ENCODE measurements at regions of chr6 and their contacts with region 1.

Region 1: DNA sequence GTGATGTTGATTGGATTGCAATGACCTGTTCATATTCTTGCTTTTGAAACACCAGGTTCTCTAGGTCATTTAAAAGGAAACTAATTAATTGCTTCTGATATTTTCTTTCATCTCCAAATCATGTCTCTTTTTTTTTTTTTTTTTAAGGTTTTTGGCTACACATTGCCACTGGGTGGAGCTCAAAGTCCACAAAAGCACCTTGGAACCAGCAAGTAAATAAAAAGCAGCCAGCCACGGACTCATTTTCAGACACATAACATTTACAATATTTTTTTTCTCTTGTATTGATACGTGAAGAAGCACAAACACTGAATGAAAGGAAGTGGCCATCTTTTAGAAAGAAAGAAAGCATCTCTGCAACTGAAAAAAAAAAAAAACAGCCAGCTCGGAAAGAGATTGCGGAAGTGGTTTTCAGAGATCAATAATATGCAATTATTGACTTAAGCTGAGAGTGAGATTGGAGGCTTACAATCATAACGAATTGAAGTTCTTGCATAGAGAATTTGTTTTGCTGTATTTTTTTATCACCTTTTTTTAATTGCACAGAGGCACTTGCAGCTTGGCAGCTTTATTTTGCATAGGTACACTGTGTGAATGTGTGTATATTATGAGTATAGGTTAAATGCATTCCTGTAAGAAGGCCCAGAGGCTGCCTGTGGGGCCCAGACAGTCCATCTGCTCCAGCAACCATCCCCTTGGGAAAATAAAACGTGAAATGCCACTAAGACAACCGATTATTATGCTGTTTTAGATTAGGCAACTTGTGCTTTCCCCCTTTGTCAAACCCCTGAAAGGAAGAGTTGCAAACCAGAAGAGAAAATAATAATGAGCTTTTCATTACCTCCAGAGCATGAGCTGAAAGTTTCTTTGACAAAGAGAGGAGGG is 28.2 kb downstream of the CGA start:
- DNase-seq: peak; percentile 61
- ATAC-seq: no peak
- H3K4me3 Mint-ChIP-seq: no peak overlapping the region
- H3K27ac Mint-ChIP-seq: no peak overlapping the region
- H3K4me1 Mint-ChIP-seq: no peaks in the 10 kb centered on the region
- H3K27me3 Mint-ChIP-seq: peaks cover 19% of the 10 kb centered on the region

Region 2: DNA sequence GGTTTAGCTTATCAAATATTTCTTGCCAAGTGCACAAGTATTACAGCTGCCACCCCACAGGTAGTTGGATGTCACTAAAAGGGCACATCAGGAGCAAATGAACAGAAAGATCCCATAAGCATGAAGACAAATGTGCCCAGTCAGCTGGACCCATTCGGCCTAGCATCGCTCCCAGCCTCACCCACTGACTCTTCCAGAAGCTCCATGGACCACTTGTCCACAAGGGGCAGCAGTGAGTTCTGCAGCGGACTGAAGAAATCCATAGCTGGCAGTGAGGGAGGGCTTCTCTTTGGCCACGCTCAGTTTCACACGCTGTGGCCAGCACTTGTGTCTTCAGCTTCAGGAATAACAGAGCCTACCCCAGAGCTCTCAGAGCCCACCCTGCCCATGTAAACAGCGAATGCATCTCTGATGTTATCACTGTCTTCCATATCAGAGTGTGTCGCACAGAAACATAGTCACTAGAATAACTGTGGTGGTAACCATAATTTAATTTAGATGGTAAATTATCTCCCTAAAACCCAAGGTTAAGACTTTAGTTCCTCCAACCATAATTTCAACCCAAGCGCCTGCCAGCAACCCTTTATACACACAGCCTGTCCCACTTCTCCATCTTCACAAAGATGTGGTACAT is 12.4 kb after region 1 on chr6:
- CTCF ChIA-PET with region 1: interaction called, 37 read pairs
- POLR2A ChIA-PET with region 1: no interaction called
- intact Hi-C with region 1: no loop called
- DNase-seq: peak; percentile 76
- ATAC-seq: peak; percentile 84
- H3K4me3 Mint-ChIP-seq: no peak overlapping the region
- H3K27ac Mint-ChIP-seq: no peak overlapping the region
- H3K4me1 Mint-ChIP-seq: no peaks in the 10 kb centered on the region
- H3K27me3 Mint-ChIP-seq: peaks cover 18% of the 10 kb centered on the region

Region 3: GRCh38 chr6:87139236-87139635 is 72.5 kb after region 1 on chr6:
- CTCF ChIA-PET with region 1: interaction called, 5 read pairs
- POLR2A ChIA-PET with region 1: no interaction called
- intact Hi-C with region 1: loop called in 1 of 2 experiments (anchors 5 kb)
- DNase-seq: peak; percentile 43
- ATAC-seq: peak; percentile 70
- H3K4me3 Mint-ChIP-seq: no peak overlapping the region
- H3K27ac Mint-ChIP-seq: no peak overlapping the region
- H3K4me1 Mint-ChIP-seq: peaks cover 2% of the 10 kb centered on the region
- H3K27me3 Mint-ChIP-seq: peaks cover 7% of the 10 kb centered on the region

Region 4: GRCh38 chr6:87237804-87238203 is 171.1 kb after region 1 on chr6:
- CTCF ChIA-PET with region 1: no interaction called
- POLR2A ChIA-PET with region 1: no interaction called
- intact Hi-C with region 1: loop called in 1 of 2 experiments (anchors 5 kb)
- DNase-seq: no peak
- ATAC-seq: peak; percentile 64
- H3K4me3 Mint-ChIP-seq: no peak overlapping the region
- H3K27ac Mint-ChIP-seq: no peak overlapping the region
- H3K4me1 Mint-ChIP-seq: no peaks in the 10 kb centered on the region
- H3K27me3 Mint-ChIP-seq: no peaks in the 10 kb centered on the region

Region 5: DNA sequence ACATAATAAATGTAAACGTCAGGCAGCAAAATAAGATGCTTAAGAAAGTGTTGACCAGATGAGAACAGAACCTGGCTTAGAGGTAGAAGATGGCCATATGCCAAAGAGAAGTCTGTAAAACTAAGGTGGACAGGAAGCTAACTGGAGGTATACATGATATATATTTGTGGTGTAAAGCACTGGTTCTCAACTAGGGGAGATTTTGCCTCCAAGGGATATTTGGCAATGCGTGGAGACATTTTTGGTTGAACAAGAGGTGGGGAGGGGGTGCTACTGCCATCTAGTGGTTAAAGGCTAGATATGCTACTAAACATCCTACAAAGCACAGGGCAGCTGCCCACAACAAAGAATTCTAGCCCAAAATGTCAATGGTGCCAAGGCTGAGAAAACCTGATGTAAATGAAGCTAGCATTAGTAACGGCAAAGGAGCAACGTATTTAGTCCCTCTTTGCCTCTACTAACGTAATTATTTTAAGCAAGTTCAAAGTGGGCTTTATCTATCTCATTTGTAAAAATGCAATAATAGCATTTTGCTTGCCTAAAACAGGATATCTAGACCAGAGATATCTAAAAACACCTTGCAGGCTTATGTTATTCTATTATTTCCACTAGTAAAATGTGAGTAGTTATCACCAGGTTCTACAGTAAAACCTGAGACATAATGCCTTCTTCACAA is 1714.2 kb after region 1 on chr6:
- CTCF ChIA-PET with region 1: no interaction called
- POLR2A ChIA-PET with region 1: no interaction called
- intact Hi-C with region 1: loop called in 1 of 2 experiments (anchors 10 kb)
- DNase-seq: peak; percentile 61
- ATAC-seq: peak; percentile 85
- H3K4me3 Mint-ChIP-seq: no peak overlapping the region
- H3K27ac Mint-ChIP-seq: no peak overlapping the region
- H3K4me1 Mint-ChIP-seq: peaks cover 11% of the 10 kb centered on the region
- H3K27me3 Mint-ChIP-seq: no peaks in the 10 kb centered on the region

Region 6: DNA sequence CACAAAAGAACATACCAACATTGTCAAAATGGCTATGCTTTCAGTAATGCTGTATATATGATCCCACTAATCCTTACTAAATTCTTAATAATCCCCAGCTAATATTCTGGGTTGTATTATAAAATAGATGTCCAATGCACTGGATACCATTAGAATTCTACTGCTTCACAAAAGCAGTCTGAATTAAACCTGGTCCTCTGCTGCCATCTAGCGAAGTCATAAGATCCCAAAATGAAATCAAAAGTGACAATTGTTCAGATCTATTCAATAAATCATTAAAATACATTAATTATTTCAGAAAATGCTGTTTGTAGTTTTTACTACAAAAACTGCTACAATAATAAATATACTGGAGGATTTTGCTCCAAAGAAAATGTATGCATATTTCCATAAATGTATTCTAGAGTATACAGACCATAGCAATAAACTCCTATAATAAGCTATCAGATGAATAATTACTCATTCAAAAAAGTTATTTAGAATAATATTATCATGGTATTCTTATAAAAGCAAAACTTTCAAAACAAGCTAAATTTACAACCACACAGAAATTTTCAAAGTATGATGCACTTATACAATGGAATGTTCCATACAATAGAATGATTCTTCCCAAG is 1804.1 kb after region 1 on chr6:
- CTCF ChIA-PET with region 1: interaction called, 3 read pairs
- POLR2A ChIA-PET with region 1: no interaction called
- intact Hi-C with region 1: loop called in 1 of 2 experiments (anchors 5 kb)
- DNase-seq: peak; percentile 44
- ATAC-seq: no peak
- H3K4me3 Mint-ChIP-seq: no peak overlapping the region
- H3K27ac Mint-ChIP-seq: no peak overlapping the region
- H3K4me1 Mint-ChIP-seq: peaks cover 28% of the 10 kb centered on the region
- H3K27me3 Mint-ChIP-seq: no peaks in the 10 kb centered on the region